ENCODE measurements at regions of chr17 and their contacts with region 1.

Region 1: GRCh38 chr17:40559954-40560591 is 5.2 kb downstream of the CCR7 start:
- DNase-seq: peak; percentile 84 to 94 (median 90)
- H3K4me3 ChIP-seq: peak overlapping the region in 36 of 59 donors; percentile 5 to 53 (median 30)
- H3K27ac ChIP-seq: peak overlapping the region in 49 of 59 donors; percentile 1 to 84 (median 57)
- H3K27me3 ChIP-seq: no peaks in the 10 kb centered on the region
- CTCF ChIP-seq: peak; percentile 94 to 100 (median 98)

Region 2: GRCh38 chr17:40303009-40303657 is 256.9 kb before region 1 on chr17:
- intact Hi-C with region 1: loop called in 1 of 2 experiments (anchors 5 kb)
- DNase-seq: no peak
- H3K4me3 ChIP-seq: no peak overlapping the region
- H3K27ac ChIP-seq: no peak overlapping the region
- H3K27me3 ChIP-seq: no peaks in the 10 kb centered on the region
- CTCF ChIP-seq: peak; percentile 55 to 95 (median 84)

Region 3: GRCh38 chr17:40362696-40363110 is 197.4 kb before region 1 on chr17:
- intact Hi-C with region 1: loop called (anchors 1 to 2 kb)
- DNase-seq: peak in 2 of 10 donors; percentile 41 to 49
- H3K4me3 ChIP-seq: peak overlapping the region in 54 of 59 donors; percentile 26 to 67 (median 48)
- H3K27ac ChIP-seq: no peak overlapping the region
- H3K27me3 ChIP-seq: peaks cover 0 to 35% (median 6%) of the 10 kb centered on the region in 45 donors
- CTCF ChIP-seq: peak in 37 of 56 donors; percentile 13 to 55 (median 33)

Region 4: DNA sequence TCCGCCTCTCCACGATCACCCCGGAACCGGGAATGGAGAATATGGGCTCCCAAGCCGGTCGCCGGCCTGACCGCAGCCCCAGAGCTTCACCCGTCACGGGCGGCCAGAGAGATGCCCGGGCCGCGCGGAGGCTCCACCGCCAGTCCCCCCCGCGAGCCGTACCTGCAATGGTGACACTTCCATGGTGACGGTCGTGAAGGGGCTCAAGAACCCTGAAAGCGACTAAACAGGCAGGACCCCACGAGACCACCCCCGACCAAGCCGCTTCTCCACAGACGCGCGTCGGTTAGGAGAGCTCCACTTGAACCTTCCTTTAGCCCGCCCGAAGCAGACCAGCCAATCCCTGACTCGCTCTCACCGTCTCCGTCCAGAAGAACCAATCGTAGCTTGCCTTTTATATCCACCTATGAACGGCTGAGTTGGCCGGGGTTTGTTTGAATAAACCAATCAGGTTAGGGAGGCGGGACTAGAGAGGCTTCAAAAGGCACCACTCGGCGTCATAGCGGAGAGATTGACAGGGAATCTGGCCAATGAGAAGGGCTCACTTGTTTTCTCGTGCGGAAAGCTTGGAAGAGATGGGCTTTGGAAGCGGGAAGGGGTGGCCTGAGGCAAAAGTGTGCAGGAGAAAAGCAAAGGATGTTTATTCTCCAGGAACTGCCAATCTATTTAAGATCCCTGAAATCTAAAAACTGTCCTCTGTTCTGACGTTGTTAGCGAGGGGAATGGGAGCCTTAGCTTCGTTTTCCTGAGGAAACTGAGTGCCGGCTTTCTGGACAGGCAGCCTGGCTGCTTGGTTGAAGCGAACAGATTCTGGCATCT is 142.3 kb before region 1 on chr17 and contains the start of gene TOP2A:
- intact Hi-C with region 1: loop called in 1 of 2 experiments (anchors 5 kb)
- DNase-seq: peak; percentile 81 to 99 (median 96)
- H3K4me3 ChIP-seq: peak within 1 kb of the TSS; percentile 40 to 88 (median 68)
- H3K27ac ChIP-seq: peak within 1 kb of the TSS in 18 of 59 donors; percentile 25 to 80 (median 50)
- H3K27me3 ChIP-seq: peaks cover 0 to 18% (median 7%) of the 10 kb centered on the region in 45 donors
- CTCF ChIP-seq: peak in 11 of 56 donors; percentile 8 to 42 (median 20)
- total RNA-seq, gene TOP2A: 0.04 to 3.1 (median 0.42) TPM in 55 of 120 experiments, not detected in the others

Region 5: DNA sequence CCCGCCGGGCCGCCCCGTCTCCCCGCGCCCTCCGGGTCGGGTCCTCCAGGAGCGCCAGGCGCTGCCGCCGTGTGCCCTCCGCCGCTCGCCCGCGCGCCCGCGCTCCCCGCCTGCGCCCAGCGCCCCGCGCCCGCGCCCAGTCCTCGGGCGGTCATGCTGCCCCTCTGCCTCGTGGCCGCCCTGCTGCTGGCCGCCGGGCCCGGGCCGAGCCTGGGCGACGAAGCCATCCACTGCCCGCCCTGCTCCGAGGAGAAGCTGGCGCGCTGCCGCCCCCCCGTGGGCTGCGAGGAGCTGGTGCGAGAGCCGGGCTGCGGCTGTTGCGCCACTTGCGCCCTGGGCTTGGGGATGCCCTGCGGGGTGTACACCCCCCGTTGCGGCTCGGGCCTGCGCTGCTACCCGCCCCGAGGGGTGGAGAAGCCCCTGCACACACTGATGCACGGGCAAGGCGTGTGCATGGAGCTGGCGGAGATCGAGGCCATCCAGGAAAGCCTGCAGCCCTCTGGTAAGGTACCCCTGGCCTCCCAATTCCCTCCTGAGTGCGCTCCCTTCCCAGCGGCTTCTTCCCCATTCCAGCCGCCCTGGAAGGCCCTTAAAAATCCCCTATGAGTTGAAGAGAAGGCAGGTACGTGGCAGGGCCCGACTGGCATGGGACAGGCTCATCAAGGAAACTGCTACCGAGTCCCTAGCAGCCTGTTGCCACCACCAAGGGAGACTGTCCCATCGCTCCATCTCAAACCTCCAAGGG is 116.3 kb before region 1 on chr17:
- intact Hi-C with region 1: loop called (anchors 1 to 2 kb)
- DNase-seq: peak; percentile 44 to 83 (median 68)
- H3K4me3 ChIP-seq: peak overlapping the region; percentile 39 to 76 (median 61)
- H3K27ac ChIP-seq: peak overlapping the region in 44 of 59 donors; percentile 8 to 91 (median 71)
- H3K27me3 ChIP-seq: no peaks in the 10 kb centered on the region
- CTCF ChIP-seq: peak in 45 of 56 donors; percentile 13 to 56 (median 31)

Region 6: DNA sequence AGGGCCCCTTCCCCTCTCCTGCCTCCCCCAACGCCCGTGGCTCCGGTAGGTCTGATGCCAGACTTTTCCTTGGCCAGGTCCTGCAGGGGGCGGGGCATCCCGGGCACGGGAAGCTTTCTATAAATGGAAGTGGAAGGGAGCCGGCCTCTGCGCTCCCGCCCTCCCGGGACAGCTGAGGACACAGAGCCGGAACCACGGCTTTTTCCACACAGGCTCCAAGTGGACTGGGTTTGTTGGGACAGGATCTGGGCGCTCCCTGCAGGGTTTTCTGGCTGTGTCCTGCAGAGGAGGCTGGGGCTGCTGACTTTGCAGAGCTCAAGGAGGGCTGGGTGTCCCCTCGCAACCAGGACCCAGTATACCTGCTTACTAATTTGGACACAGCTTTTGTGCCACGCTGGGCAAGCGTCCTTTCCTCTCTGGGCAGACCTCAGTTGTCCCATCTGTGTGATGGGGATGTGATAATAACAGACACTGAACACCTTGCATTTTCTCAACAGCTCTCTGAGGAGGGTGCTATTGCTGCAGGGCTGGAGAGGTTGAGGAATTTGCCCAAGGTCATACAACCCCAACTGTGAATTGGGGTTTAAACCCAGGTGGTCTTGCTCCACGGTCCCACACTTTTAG is 60.4 kb before region 1 on chr17:
- intact Hi-C with region 1: no loop called
- DNase-seq: peak in 7 of 10 donors; percentile 23 to 87 (median 46)
- H3K4me3 ChIP-seq: peak overlapping the region in 11 of 59 donors; percentile 0 to 36 (median 10)
- H3K27ac ChIP-seq: peak overlapping the region in 2 of 59 donors; percentile 11 to 51
- H3K27me3 ChIP-seq: peaks cover 0 to 4% (median 0%) of the 10 kb centered on the region in 45 donors
- CTCF ChIP-seq: peak in 8 of 56 donors; percentile 10 to 19 (median 16)

Region 7: DNA sequence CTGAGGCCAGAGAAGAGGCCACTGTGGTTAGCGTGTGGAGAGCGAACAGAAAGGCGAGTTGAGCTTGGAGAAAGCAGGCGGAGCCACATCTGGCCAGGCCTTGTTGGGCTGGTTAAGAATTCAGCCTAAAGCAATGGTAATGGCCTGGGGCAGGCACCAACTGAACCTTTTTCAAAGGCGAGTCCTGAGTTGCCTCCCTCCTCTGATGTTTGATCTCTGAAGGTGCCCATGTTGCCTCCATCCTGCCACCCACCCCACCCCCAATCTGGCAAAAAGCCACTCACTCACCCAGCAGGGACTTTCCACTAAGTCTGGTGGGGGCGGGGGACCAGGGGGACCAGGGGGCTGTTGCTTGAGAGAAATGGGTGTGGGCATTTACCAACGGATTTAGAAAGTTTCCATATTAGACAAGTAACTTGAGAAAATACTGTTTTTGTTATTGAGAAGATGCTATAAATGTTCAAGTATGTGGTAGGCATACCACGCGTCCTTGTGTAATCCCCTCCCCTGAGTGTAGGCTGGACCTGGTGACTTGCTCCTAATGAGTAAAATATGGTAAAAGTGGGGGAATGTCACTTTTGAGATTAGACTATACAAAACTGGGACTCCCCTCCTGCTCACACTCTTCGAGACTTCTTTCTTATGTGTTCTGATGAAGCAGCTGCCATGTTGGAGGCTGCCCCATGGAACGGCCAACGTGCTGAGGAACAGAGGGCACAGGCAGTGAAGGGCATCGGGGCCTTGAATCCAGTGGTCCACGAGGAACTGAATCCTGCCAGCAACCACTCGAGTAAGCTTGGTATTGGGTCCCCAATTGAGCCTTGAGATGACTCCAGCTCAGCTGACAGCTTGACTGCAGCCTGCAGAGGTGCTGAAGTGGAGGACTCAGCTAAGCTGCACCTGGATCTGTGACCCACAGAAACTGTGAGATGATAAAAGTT is 28.8 kb before region 1 on chr17:
- intact Hi-C with region 1: loop called (anchors 2 kb)
- DNase-seq: peak in 1 of 10 donors; percentile 14
- H3K4me3 ChIP-seq: no peak overlapping the region
- H3K27ac ChIP-seq: no peak overlapping the region
- H3K27me3 ChIP-seq: peaks cover 0 to 4% (median 0%) of the 10 kb centered on the region in 45 donors
- CTCF ChIP-seq: no peak

Region 8: GRCh38 chr17:40536295-40537171 is 23.5 kb before region 1 on chr17:
- intact Hi-C with region 1: loop called (anchors 2 kb)
- DNase-seq: peak in 6 of 10 donors; percentile 34 to 70 (median 58)
- H3K4me3 ChIP-seq: no peak overlapping the region
- H3K27ac ChIP-seq: peak overlapping the region in 49 of 59 donors; percentile 6 to 83 (median 60)
- H3K27me3 ChIP-seq: no peaks in the 10 kb centered on the region
- CTCF ChIP-seq: no peak